Heart left ventricle (tissue), 16 donors: ENCODE measurements at regions of chr1 and their contacts with region 1.

Region 1: GRCh38 chr1:53359225-53359923 is 31.5 kb upstream of the LRP8 start:
- DNase-seq: peak in 1 of 5 donors; percentile 3
- ATAC-seq: no peak
- H3K4me3 ChIP-seq: no peak overlapping the region
- H3K27ac ChIP-seq: no peak overlapping the region
- H3K4me1 ChIP-seq: no peaks in the 10 kb centered on the region
- H3K27me3 ChIP-seq: no peaks in the 10 kb centered on the region
- CTCF ChIP-seq: no peak
- POLR2A ChIP-seq: no peak

Region 2: DNA sequence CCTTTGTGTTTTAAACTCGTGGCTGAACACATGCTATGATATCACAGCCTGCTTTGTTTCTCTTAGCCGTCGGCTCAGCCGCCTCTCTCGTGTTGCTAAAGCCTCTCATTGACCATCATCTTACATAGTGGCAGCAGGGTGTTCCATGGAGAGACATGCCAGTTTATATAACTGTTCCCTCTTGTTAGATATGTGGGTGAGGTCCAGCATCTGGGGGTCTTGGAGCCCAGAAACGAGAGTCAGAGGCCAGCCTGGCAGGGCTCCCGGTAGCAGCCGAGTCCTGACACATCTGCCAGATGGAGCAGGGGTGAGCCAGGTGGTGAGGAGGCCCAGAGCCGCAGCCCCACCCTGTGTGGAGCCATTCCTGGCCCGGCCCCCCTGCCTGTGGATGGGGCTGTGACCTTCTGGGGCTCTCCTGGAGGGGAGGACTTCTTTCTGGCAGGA is 285.5 kb before region 1 on chr1:
- intact Hi-C with region 1: no loop called
- DNase-seq: peak; percentile 44 to 73 (median 67)
- ATAC-seq: peak; percentile 63 to 84 (median 68)
- H3K4me3 ChIP-seq: no peak overlapping the region
- H3K27ac ChIP-seq: peak overlapping the region in 8 of 12 donors; percentile 13 to 74 (median 46)
- H3K4me1 ChIP-seq: peaks cover 0 to 19% (median 0%) of the 10 kb centered on the region in 12 donors
- H3K27me3 ChIP-seq: no peaks in the 10 kb centered on the region
- CTCF ChIP-seq: no peak
- POLR2A ChIP-seq: no peak

Region 3: DNA sequence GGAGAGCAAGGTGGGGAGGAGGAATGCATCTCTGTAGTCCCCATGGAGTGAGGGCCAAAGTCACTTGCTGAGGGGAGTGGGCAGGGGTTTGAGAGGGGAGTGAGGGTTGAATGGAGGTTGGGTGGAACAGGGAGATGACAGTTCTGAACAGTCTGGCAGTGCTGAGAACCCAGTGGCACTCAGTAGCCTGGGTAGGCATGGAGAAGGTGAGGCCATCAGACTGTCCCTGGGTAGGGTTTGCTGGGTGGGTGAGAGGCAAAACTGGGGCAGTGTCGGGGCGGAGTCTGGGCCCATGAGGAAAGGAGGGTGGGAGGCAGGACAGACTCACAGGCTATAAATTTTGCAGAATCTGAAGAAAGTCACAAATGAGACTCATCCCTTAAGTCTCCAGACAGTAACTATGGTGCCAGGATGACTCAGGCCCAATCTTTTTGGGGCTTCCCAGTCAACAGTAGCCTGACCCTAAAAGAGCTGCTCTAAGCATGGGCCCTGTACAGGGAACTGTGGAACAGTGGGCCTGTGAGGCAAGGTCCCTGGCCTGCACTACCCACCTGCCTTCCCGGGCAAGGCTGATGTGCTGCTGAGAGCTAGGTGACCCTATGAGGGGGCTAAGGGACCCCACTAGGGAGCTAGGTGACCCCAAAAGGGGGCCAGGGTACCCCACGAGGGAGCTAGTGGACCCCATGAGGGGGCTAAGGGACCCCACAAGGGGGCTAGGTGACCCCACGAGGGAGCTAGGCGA is 48.8 kb after region 1 on chr1:
- intact Hi-C with region 1: loop called in 1 of 10 experiments (anchors 5 kb)
- DNase-seq: no peak
- ATAC-seq: no peak
- H3K4me3 ChIP-seq: no peak overlapping the region
- H3K27ac ChIP-seq: no peak overlapping the region
- H3K4me1 ChIP-seq: peaks cover 0 to 11% (median 0%) of the 10 kb centered on the region in 12 donors
- H3K27me3 ChIP-seq: peaks cover 0 to 33% (median 4%) of the 10 kb centered on the region in 9 donors
- CTCF ChIP-seq: no peak
- POLR2A ChIP-seq: no peak